ENCODE measurements at regions of chr9 and their contacts with region 1.

Region 1: GRCh38 chr9:14674630-14675029 is 18.6 kb downstream of the ZDHHC21 start:
- DNase-seq: no peak
- CTCF ChIP-seq: no peak

Region 2: GRCh38 chr9:14692604-14693205 is 18.1 kb after region 1 on chr9:
- CTCF ChIA-PET with region 1: interaction called, 17 read pairs
- POLR2A ChIA-PET with region 1: no interaction called
- DNase-seq: peak; percentile 55
- CTCF ChIP-seq: peak; percentile 11

Measured in GM10248 (cell line).